Activated T-helper 2 cell treated with anti-CD3 and anti-CD28 coated beads, Interferon-gamma antibody, Interleukin-2, Interleukin-4, amounts not matched to agents 10 μg/mL and 5 μg/mL and 100 μg/mL, durations not matched to agents 14 hours and 24 hours and 36 hours (primary cell): ENCODE measurements at regions of chrX and their contacts with region 1.

Region 1: GRCh38 chrX:120365320-120365719 is 3.4 kb downstream of the ATP1B4 start:
- DNase-seq: peak; percentile 10
- H3K4me3 Mint-ChIP-seq: no peak overlapping the region
- H3K27ac Mint-ChIP-seq: no peak overlapping the region
- H3K4me1 Mint-ChIP-seq: peaks cover 1% of the 10 kb centered on the region
- H3K27me3 Mint-ChIP-seq: no peaks in the 10 kb centered on the region

Region 2: GRCh38 chrX:120474085-120474484 is 108.8 kb after region 1 on chrX:
- intact Hi-C with region 1: loop called (anchors 2 kb)
- DNase-seq: no peak
- H3K4me3 Mint-ChIP-seq: no peak overlapping the region
- H3K27ac Mint-ChIP-seq: no peak overlapping the region
- H3K4me1 Mint-ChIP-seq: peaks cover 9% of the 10 kb centered on the region
- H3K27me3 Mint-ChIP-seq: no peaks in the 10 kb centered on the region